ENCODE measurements at regions of chr2 and their contacts with region 1.

Region 1: GRCh38 chr2:178072383-178073301 is at the start of gene PDE11A:
- DNase-seq: peak; percentile 82 to 96 (median 86)
- ATAC-seq: peak; percentile 98
- H3K4me3 ChIP-seq: peak within 1 kb of the TSS; percentile 42
- H3K27ac ChIP-seq: peak within 1 kb of the TSS; percentile 51
- H3K4me1 ChIP-seq: peaks cover 27 to 55% of the 10 kb centered on the region in 2 experiments
- H3K27me3 ChIP-seq: no peaks in the 10 kb centered on the region
- CTCF ChIP-seq: no peak
- EP300 ChIP-seq: no peak
- POLR2A ChIP-seq: peak; percentile 87
- RAD21 ChIP-seq: no peak
- polyA plus RNA-seq, gene PDE11A: 3.2 to 3.9 TPM

Region 2: GRCh38 chr2:177799531-177799930 is 273.1 kb before region 1 on chr2:
- CTCF ChIA-PET with region 1: no interaction called
- POLR2A ChIA-PET with region 1: no interaction called
- in situ Hi-C with region 1: no loop called
- intact Hi-C with region 1: loop called (anchors 5 kb)
- DNase-seq: peak; percentile 24 to 59 (median 32)
- ATAC-seq: peak; percentile 99
- H3K4me3 ChIP-seq: no peak overlapping the region
- H3K27ac ChIP-seq: no peak overlapping the region
- H3K4me1 ChIP-seq: no peaks in the 10 kb centered on the region
- H3K27me3 ChIP-seq: peaks cover 0 to 2% of the 10 kb centered on the region in 2 experiments; a peak in 1 of 5 replicates
- CTCF ChIP-seq: peak; percentile 64 to 77 (median 73)
- EP300 ChIP-seq: no peak
- POLR2A ChIP-seq: no peak
- RAD21 ChIP-seq: peak; percentile 48 to 71

Region 3: DNA sequence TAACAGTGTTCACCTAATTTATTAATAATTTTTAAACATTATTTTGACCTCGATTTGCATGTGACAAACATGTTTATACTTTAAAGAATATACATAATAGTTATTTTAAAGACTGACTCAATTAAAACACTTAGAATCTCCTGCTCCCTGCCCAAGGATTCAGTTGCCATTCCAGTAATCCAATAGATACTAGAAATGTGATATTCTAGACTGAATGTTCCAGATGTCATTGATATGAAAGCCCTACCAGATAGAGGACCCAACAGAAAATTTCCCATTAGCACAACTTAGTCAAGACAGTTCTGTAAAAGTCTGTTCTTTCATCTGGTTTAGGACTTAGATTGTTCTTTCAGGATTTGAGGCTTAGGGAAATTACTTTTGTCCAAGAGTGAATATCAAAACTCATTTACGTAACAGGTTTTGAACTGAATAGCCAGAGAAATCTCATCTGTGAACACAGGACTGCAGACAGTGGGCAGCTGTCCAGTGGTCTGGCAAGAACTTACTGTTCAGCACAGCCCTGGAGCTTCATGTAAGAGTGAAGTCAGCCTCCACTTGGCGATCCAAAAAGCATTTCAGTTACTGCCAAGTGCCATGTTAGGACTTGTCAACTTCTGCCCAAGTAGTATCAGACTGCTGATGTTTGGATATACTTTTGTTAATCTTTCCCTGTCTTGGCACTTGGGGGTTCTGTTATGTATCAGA is 199.1 kb after region 1 on chr2:
- CTCF ChIA-PET with region 1: no interaction called
- POLR2A ChIA-PET with region 1: no interaction called
- in situ Hi-C with region 1: no loop called
- intact Hi-C with region 1: no loop called
- DNase-seq: no peak
- ATAC-seq: no peak
- H3K4me3 ChIP-seq: no peak overlapping the region
- H3K27ac ChIP-seq: no peak overlapping the region
- H3K4me1 ChIP-seq: peaks cover 26 to 55% of the 10 kb centered on the region in 2 experiments
- H3K27me3 ChIP-seq: no peaks in the 10 kb centered on the region
- CTCF ChIP-seq: no peak
- EP300 ChIP-seq: no peak
- POLR2A ChIP-seq: no peak
- RAD21 ChIP-seq: no peak

Measured in K562 (cell line).